ENCODE measurements at regions of chr3 and their contacts with region 1.

Region 1: GRCh38 chr3:51498876-51499738 is 708 bp downstream of the DCAF1 start:
- DNase-seq: peak; percentile 77
- ATAC-seq: peak; percentile 40
- H3K4me3 Mint-ChIP-seq: peak overlapping the region; percentile 89
- H3K27ac Mint-ChIP-seq: peak overlapping the region; percentile 95
- H3K4me1 Mint-ChIP-seq: peaks cover 22% of the 10 kb centered on the region
- H3K27me3 Mint-ChIP-seq: no peaks in the 10 kb centered on the region
- CTCF ChIP-seq: no peak

Region 2: DNA sequence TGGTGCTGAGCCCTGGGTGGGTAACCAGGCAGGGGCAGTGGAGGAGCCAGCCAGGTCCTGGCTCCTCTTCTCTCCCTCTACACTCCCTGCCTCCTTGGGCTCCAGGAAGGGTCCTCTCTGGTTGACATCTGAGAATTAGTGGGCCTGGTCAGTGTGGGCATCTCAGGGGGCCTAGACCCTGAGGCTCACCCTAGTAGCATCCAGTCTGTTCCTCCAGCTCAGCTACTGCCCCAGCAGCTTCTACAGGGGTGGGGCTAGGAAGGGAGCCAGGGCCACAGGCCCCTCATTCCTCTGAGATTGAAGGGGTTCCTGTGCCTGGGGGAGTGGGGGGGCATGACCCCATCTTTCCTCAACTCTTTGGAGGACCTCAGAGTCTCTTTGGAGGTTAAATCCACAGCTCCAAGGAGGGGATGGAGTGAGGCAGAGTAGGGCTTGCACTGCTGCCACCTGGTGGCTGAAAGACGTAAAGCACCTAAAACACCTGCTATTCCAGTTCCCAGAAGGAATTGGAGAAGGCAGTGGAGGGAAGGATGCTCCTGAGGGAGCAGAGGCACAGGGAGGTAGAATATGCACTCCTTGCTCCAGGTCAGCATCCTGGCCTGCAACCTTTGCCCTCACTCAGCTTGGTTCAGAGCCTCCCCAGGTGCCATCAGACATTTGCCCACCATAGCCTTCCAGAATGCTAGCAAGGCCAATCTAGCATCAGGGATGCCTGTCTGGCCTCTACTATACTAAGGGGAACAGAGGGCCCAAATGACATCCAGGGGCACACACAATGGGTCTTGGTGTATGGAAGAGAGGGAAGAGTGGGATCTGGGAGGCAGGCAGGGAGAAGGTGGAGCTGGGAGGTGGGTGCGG is 956.7 kb before region 1 on chr3:
- CTCF ChIA-PET with region 1: no interaction called
- POLR2A ChIA-PET with region 1: interaction called, 14 read pairs
- intact Hi-C with region 1: no loop called
- DNase-seq: peak; percentile 54
- ATAC-seq: peak; percentile 71
- H3K4me3 Mint-ChIP-seq: no peak overlapping the region
- H3K27ac Mint-ChIP-seq: peak overlapping the region; percentile 41
- H3K4me1 Mint-ChIP-seq: no peaks in the 10 kb centered on the region
- H3K27me3 Mint-ChIP-seq: peaks cover 27% of the 10 kb centered on the region
- CTCF ChIP-seq: peak; percentile 90

Region 3: GRCh38 chr3:50926868-50927267 is 572.2 kb before region 1 on chr3:
- CTCF ChIA-PET with region 1: no interaction called
- POLR2A ChIA-PET with region 1: no interaction called
- intact Hi-C with region 1: no loop called
- DNase-seq: no peak
- ATAC-seq: no peak
- H3K4me3 Mint-ChIP-seq: no peak overlapping the region
- H3K27ac Mint-ChIP-seq: no peak overlapping the region
- H3K4me1 Mint-ChIP-seq: no peaks in the 10 kb centered on the region
- H3K27me3 Mint-ChIP-seq: peaks cover 12% of the 10 kb centered on the region
- CTCF ChIP-seq: no peak

Region 4: DNA sequence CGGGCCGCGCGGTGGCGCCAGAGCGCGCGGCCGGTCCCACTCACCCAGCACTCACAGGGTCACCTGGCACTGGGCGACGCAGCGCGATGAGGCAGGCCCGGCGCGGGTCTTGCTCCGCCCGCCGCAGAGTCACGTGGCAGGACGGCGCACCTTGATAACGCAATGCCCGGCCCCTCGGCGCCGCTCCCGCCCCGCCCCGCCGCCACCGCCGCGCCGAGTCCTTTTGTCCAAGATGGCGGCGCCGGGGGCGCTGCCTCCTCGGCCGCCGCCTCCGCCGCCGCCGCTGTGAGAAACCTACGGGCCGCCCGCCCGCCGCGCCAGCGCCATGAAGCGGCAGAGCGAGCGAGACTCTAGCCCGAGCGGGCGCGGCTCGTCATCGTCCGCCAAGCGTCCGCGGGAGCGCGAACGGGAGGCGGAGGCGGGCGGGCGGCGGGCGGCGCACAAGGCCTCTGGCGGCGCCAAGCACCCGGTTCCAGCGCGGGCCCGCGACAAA is 108.0 kb before region 1 on chr3 and contains the start of gene RBM15B:
- CTCF ChIA-PET with region 1: interaction called, 5 read pairs
- POLR2A ChIA-PET with region 1: interaction called, 9 read pairs
- intact Hi-C with region 1: loop called (anchors 1 kb)
- DNase-seq: peak; percentile 97
- ATAC-seq: peak; percentile 94
- H3K4me3 Mint-ChIP-seq: peak within 1 kb of the TSS; percentile 82
- H3K27ac Mint-ChIP-seq: peak within 1 kb of the TSS; percentile 73
- H3K4me1 Mint-ChIP-seq: peaks cover 60% of the 10 kb centered on the region
- H3K27me3 Mint-ChIP-seq: no peaks in the 10 kb centered on the region
- CTCF ChIP-seq: no peak
- total RNA-seq, gene RBM15B: 28.0 and 28.9 TPM in 2 replicates

Region 5: DNA sequence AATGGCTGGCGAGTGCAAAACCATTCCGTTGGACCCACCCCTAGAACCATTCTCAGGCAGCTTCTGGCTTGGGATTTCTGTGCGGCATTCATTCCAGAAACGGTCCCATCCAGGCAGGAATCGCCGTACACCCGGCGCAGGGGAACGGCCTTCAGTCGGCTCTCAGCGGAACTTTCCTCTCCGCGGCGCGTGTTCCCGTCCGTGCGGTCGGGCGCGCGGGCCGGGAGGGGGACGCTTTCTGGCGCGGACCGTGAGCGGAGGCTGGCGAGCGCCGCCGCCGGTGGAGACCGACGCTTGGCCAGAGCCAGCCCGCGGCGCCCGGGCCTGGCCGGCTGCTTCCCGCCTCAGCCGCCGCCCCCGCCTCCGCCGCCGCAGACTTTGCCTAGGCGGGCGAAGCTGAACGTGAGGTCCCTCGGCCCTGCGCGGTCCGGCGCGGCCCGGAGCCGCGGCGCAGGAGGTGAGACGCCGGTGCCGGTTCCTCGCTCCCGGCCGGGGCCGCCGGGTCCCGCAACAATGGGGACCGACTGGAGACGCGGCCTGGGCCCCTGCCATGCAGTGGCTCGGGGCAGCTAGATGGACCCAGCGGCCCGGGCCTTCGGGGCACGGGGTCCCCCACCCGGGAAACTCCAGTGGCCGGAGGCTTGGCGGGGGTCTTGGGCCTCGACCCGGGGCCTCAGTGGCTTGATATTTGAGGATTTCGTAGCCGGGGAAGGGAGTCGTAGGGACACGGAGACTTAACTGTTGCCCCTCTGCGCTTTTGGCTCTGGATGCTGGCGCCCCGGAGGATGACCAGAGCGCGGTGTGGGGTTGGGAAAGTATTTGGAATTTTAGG is 39.6 kb after region 1 on chr3 and contains the start of gene RAD54L2:
- CTCF ChIA-PET with region 1: interaction called, 23 read pairs
- POLR2A ChIA-PET with region 1: interaction called, 35 read pairs
- intact Hi-C with region 1: loop called (anchors 1 kb)
- DNase-seq: peak; percentile 80
- ATAC-seq: peak; percentile 90
- H3K4me3 Mint-ChIP-seq: peak within 1 kb of the TSS; percentile 90
- H3K27ac Mint-ChIP-seq: peak within 1 kb of the TSS; percentile 91
- H3K4me1 Mint-ChIP-seq: peaks cover 45% of the 10 kb centered on the region
- H3K27me3 Mint-ChIP-seq: no peaks in the 10 kb centered on the region
- CTCF ChIP-seq: no peak
- total RNA-seq, gene RAD54L2: 34.3 and 39.3 TPM in 2 replicates

Region 6: DNA sequence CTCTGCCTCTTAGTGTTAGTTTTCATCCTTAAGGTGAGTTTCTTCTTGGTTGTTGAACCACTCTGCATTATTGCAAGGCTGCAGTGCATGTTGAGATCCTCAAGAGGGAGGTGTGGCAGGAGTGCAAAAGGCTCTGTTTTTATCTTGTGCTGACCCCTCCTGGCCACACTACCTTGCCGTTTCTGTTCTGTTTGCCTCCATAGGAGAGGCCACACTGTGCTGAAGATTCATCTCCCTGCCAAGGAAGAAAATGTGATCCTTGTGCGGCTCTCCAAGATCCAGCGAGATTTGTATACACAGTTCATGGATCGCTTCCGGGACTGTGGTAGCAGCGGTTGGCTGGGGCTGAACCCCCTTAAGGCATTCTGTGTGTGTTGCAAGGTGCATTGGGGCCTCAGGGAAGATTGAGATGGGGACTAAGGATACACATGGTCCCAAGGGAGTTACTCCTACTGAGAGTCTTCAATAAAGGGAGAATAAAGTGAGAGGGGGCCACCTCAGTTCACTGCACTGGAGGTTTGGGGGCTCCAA is 138.9 kb after region 1 on chr3:
- CTCF ChIA-PET with region 1: interaction called, 20 read pairs
- POLR2A ChIA-PET with region 1: no interaction called
- intact Hi-C with region 1: loop called (anchors 1 kb)
- DNase-seq: no peak
- ATAC-seq: peak; percentile 90
- H3K4me3 Mint-ChIP-seq: no peak overlapping the region
- H3K27ac Mint-ChIP-seq: no peak overlapping the region
- H3K4me1 Mint-ChIP-seq: no peaks in the 10 kb centered on the region
- H3K27me3 Mint-ChIP-seq: no peaks in the 10 kb centered on the region
- CTCF ChIP-seq: no peak

Region 7: GRCh38 chr3:51696954-51697353 is 197.8 kb after region 1 on chr3:
- CTCF ChIA-PET with region 1: no interaction called
- POLR2A ChIA-PET with region 1: interaction called, 13 read pairs
- intact Hi-C with region 1: no loop called
- DNase-seq: no peak
- ATAC-seq: no peak
- H3K4me3 Mint-ChIP-seq: no peak overlapping the region
- H3K27ac Mint-ChIP-seq: no peak overlapping the region
- H3K4me1 Mint-ChIP-seq: no peaks in the 10 kb centered on the region
- H3K27me3 Mint-ChIP-seq: no peaks in the 10 kb centered on the region
- CTCF ChIP-seq: no peak

Region 8: GRCh38 chr3:52685709-52686691 is 1186.9 kb after region 1 on chr3 and contains the starts of genes GNL3 and PBRM1:
- CTCF ChIA-PET with region 1: no interaction called
- POLR2A ChIA-PET with region 1: no interaction called
- intact Hi-C with region 1: loop called (anchors 5 kb)
- DNase-seq: peak; percentile 92
- ATAC-seq: peak; percentile 89
- H3K4me3 Mint-ChIP-seq: peak within 1 kb of the TSS; percentile 96
- H3K27ac Mint-ChIP-seq: peak within 1 kb of the TSS; percentile 95
- H3K4me1 Mint-ChIP-seq: peaks cover 53% of the 10 kb centered on the region
- H3K27me3 Mint-ChIP-seq: no peaks in the 10 kb centered on the region
- CTCF ChIP-seq: no peak
- total RNA-seq, gene GNL3: 137 and 145 TPM in 2 replicates
- total RNA-seq, gene PBRM1: 60.0 and 62.1 TPM in 2 replicates